Activated CD4-positive, alpha-beta memory T cell treated with anti-CD3 and anti-CD28 coated beads, Interleukin-2, amount 10 ng/mL, durations not matched to agents 7 days and 5 days (primary cell): ENCODE measurements at regions of chr4 and their contacts with region 1.

Region 1: DNA sequence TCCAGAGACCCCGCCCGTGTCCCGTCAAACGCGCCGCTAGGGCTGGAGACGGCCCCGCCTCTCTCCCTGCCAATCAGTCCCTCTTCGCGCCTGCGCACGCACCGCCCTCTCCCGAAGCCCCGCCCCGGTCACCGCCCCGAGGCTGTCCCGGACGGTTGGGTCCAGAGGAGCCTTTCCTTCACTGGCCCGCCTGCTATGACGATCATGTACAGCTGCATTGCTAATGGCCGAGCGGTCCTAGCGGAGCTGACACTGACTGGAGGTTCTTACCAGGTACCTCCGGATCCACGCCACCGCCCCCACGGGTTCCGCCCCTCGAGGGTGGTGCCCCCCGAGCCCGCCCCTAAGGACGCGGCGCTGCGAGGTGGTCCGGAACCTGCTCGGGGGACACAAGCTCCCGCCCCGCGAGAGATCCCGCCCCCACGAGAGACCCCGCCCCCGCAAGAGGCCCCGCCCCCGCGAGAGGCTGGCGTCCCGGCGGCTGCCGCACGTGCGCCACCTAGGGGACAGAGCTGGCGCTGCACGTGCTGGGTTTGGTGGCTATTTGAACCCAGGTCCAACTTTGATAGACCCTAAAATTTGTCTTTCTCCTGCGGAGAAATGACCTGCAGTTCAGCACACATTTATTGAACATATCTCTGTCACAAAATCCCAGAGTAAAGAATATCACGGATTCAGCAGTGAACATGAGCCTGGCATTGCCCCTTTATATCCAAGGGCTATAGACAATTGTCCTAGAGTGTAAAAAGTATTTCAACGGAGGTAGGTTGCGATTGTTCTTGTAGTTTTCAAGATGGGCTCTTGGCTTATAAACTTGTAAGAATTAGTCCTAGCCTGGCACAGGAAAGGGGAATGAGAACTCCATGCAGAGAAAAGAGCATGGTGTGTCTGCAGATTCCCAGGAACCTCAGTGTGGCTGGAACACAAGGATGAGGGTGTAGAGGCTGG is 88.7 kb downstream of the HNRNPD start:
- DNase-seq: peak; percentile 99
- H3K4me3 Mint-ChIP-seq: peak overlapping the region; percentile 65
- H3K27ac Mint-ChIP-seq: peak overlapping the region; percentile 57
- H3K4me1 Mint-ChIP-seq: peaks cover 12% of the 10 kb centered on the region
- H3K27me3 Mint-ChIP-seq: peaks cover 25% of the 10 kb centered on the region

Region 2: GRCh38 chr4:82268050-82268825 is 16.9 kb before region 1 on chr4:
- CTCF ChIA-PET with region 1: interaction called, 12 read pairs
- POLR2A ChIA-PET with region 1: no interaction called
- DNase-seq: peak; percentile 51
- H3K4me3 Mint-ChIP-seq: no peak overlapping the region
- H3K27ac Mint-ChIP-seq: no peak overlapping the region
- H3K4me1 Mint-ChIP-seq: peaks cover 8% of the 10 kb centered on the region
- H3K27me3 Mint-ChIP-seq: peaks cover 10% of the 10 kb centered on the region

Region 3: GRCh38 chr4:82360298-82361177 is 75.4 kb after region 1 on chr4:
- CTCF ChIA-PET with region 1: interaction called, 13 read pairs
- POLR2A ChIA-PET with region 1: interaction called, 4 read pairs
- DNase-seq: no peak
- H3K4me3 Mint-ChIP-seq: no peak overlapping the region
- H3K27ac Mint-ChIP-seq: peak overlapping the region; percentile 11
- H3K4me1 Mint-ChIP-seq: peaks cover 86% of the 10 kb centered on the region
- H3K27me3 Mint-ChIP-seq: no peaks in the 10 kb centered on the region